Mammary epithelial cell (primary cell): ENCODE measurements at regions of chr13 and their contacts with region 1.

Region 1: GRCh38 chr13:50208826-50209335 is 193.6 kb downstream of the KCNRG start:
- DNase-seq: peak; percentile 43
- H3K4me3 ChIP-seq: no peak overlapping the region
- H3K27ac ChIP-seq: no peak overlapping the region
- H3K4me1 ChIP-seq: no peaks in the 10 kb centered on the region
- H3K27me3 ChIP-seq: no peaks in the 10 kb centered on the region
- CTCF ChIP-seq: no peak

Region 2: GRCh38 chr13:49877629-49878218 is 331.2 kb before region 1 on chr13:
- CTCF ChIA-PET with region 1: no interaction called
- dilution Hi-C with region 1: no loop called
- in situ Hi-C with region 1: no loop called
- intact Hi-C with region 1: no loop called
- DNase-seq: peak; percentile 14
- H3K4me3 ChIP-seq: no peak overlapping the region
- H3K27ac ChIP-seq: no peak overlapping the region
- H3K4me1 ChIP-seq: no peaks in the 10 kb centered on the region
- H3K27me3 ChIP-seq: no peaks in the 10 kb centered on the region
- CTCF ChIP-seq: no peak

Region 3: GRCh38 chr13:50065712-50066111 is 143.2 kb before region 1 on chr13:
- CTCF ChIA-PET with region 1: no interaction called
- dilution Hi-C with region 1: no loop called
- in situ Hi-C with region 1: no loop called
- intact Hi-C with region 1: no loop called
- DNase-seq: no peak
- H3K4me3 ChIP-seq: no peak overlapping the region
- H3K27ac ChIP-seq: no peak overlapping the region
- H3K4me1 ChIP-seq: no peaks in the 10 kb centered on the region
- H3K27me3 ChIP-seq: no peaks in the 10 kb centered on the region
- CTCF ChIP-seq: no peak

Region 4: DNA sequence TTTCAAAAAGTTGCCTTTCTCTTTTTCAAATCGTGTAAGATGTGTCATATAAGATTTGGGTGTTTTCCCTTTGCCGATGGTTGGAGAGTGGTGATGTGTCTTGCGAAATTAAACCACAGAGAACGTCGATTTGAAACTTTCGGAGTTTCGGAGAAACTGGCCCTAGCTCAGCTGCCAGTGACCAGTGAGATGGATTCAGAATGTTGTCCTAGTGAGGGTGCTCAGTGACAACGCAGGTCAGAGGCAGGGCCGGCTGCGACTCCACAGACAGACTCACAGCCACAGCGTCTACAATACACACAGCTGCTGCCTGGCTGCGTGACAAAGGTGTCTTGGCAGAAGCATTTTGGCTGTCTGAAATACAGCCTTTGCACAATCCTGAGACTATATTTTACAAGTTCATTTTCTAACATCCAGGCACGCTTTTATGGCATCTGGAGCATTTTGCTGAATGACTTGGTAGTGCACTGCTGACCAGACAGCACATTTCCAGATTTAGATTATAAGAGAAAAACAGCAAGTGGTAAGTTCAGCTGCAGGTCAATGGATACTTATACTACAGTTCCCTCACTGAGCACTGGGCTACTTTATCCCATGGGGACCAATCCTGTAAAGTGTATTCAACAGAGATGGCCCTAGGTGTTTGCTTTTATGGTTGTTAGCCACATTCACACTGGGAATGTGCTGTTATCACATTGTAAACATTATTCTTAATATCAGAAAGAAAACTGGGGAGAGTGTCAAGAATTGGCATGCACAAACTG is 13.9 kb after region 1 on chr13:
- CTCF ChIA-PET with region 1: no interaction called
- dilution Hi-C with region 1: no loop called
- in situ Hi-C with region 1: no loop called
- intact Hi-C with region 1: loop called (anchors 1 kb)
- DNase-seq: peak; percentile 96
- H3K4me3 ChIP-seq: peak overlapping the region in 2 of 3 experiments; percentile 6 to 24
- H3K27ac ChIP-seq: peak overlapping the region; percentile 62
- H3K4me1 ChIP-seq: peaks cover 27% of the 10 kb centered on the region
- H3K27me3 ChIP-seq: no peaks in the 10 kb centered on the region
- CTCF ChIP-seq: peak in 1 of 2 donors; percentile 5

Region 5: GRCh38 chr13:50250401-50250800 is 41.5 kb after region 1 on chr13:
- CTCF ChIA-PET with region 1: no interaction called
- dilution Hi-C with region 1: loop called (anchors 5 kb)
- in situ Hi-C with region 1: no loop called
- intact Hi-C with region 1: no loop called
- DNase-seq: no peak
- H3K4me3 ChIP-seq: no peak overlapping the region
- H3K27ac ChIP-seq: no peak overlapping the region
- H3K4me1 ChIP-seq: peaks cover 4% of the 10 kb centered on the region
- H3K27me3 ChIP-seq: no peaks in the 10 kb centered on the region
- CTCF ChIP-seq: no peak

Region 6: DNA sequence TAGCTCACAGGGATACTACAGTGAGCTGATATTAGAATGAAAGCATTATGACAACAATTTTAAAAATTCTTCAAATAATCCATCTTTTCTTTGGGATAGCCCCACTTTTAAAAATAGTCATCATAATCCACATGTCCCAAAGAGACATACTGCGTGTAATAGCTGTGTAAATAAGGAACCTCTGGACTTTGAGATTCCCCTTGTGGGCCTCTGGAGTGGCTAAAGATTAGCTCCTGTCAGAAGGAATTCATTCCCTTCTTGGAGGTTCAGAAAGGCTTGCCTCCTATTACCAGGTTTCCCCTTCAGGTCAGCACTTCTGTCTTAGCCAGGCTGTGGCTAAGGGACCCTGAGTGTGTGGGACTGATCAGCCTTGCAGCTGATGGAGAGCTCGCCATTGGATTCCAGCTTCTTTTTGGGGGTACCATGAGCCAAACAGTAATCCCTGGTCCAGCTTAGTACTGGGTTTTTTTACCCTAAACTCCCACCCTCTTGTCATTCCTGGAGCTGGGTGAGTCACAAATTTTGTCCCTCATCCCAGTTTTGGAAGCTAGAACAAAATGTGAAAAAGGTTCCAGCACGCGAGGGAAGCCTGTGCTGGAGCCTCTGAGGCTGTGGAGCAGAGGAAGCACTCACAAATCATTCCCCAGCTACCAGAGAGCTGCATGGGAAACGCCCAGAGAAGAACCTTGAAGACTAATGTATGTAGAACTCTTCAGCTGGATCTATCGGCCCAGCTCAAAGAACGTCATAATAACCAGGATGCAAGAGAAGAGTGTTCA is 797.4 kb after region 1 on chr13:
- CTCF ChIA-PET with region 1: no interaction called
- dilution Hi-C with region 1: no loop called
- in situ Hi-C with region 1: no loop called
- intact Hi-C with region 1: no loop called
- DNase-seq: no peak
- H3K4me3 ChIP-seq: no peak overlapping the region
- H3K27ac ChIP-seq: no peak overlapping the region
- H3K4me1 ChIP-seq: no peaks in the 10 kb centered on the region
- H3K27me3 ChIP-seq: no peaks in the 10 kb centered on the region
- CTCF ChIP-seq: no peak